Adrenal gland (tissue), 19 donors: ENCODE measurements at regions of chr7 and their contacts with region 1.

Region 1: GRCh38 chr7:23181684-23182553 is at the start of gene NUP42:
- DNase-seq: peak; percentile 94 to 99 (median 98)
- H3K4me3 ChIP-seq: peak within 1 kb of the TSS in 3 of 4 donors; percentile 63 to 77 (median 64)
- H3K27ac ChIP-seq: peak within 1 kb of the TSS; percentile 90 to 98 (median 94)
- H3K4me1 ChIP-seq: peaks cover 12 to 38% of the 10 kb centered on the region in 2 donors
- H3K27me3 ChIP-seq: no peaks in the 10 kb centered on the region
- CTCF ChIP-seq: peak in 1 of 6 experiments; percentile 2
- POLR2A ChIP-seq: peak; percentile 52 to 85
- total RNA-seq, gene NUP42: 20.6 to 56.2 (median 32.6) TPM

Region 2: DNA sequence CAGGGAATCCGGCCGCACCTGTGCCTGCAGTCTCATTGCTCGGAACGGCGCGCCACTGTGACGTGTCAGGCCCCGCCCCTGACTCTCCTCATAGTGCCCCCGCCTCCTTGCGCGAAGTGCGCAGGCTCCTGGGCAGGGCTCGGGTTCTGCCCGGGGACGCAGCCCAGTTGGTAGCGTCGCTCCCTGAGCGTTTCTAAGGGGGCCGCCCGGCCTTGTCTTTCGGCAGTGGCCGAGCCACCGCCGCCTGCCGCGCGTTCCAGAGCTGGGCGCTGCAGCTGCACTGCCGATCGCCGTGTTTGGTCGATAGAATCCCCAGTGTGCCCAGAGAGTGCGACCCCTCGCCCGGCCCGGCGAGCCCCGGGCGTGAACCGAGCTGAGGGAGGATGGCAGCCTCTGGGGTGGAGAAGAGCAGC is 76.3 kb before region 1 on chr7 and contains the start of gene KLHL7:
- intact Hi-C with region 1: loop called (anchors 5 to 10 kb)
- DNase-seq: peak; percentile 96 to 99 (median 98)
- H3K4me3 ChIP-seq: peak within 1 kb of the TSS; percentile 8 to 91 (median 52)
- H3K27ac ChIP-seq: peak within 1 kb of the TSS; percentile 51 to 96 (median 93)
- H3K4me1 ChIP-seq: peaks cover 16 to 37% of the 10 kb centered on the region in 2 donors
- H3K27me3 ChIP-seq: no peaks in the 10 kb centered on the region
- CTCF ChIP-seq: peak in 1 of 6 experiments; percentile 3
- POLR2A ChIP-seq: peak; percentile 94 to 99
- total RNA-seq, gene KLHL7: 28.8 to 74.9 (median 44.8) TPM

Region 3: GRCh38 chr7:23298885-23299769 is 117.2 kb after region 1 on chr7 and contains the start of gene MALSU1:
- intact Hi-C with region 1: no loop called
- DNase-seq: peak; percentile 94 to 99 (median 98)
- H3K4me3 ChIP-seq: peak within 1 kb of the TSS; percentile 57 to 88 (median 73)
- H3K27ac ChIP-seq: peak within 1 kb of the TSS in 4 of 5 donors; percentile 64 to 90 (median 68)
- H3K4me1 ChIP-seq: peaks cover 7 to 36% of the 10 kb centered on the region in 2 donors
- H3K27me3 ChIP-seq: no peaks in the 10 kb centered on the region
- CTCF ChIP-seq: no peak
- POLR2A ChIP-seq: peak; percentile 86 to 87
- total RNA-seq, gene MALSU1: 65.3 to 120 (median 83.4) TPM